Activated naive CD4-positive, alpha-beta T cell treated with anti-CD3 and anti-CD28 coated beads for 36 hours (primary cell): ENCODE measurements at regions of chr7 and their contacts with region 1.

Region 1: GRCh38 chr7:44391746-44392617 is 66.6 kb upstream of the CAMK2B start:
- DNase-seq: no peak
- H3K4me3 Mint-ChIP-seq: no peak overlapping the region
- H3K27ac Mint-ChIP-seq: no peak overlapping the region
- H3K4me1 Mint-ChIP-seq: no peaks in the 10 kb centered on the region
- H3K27me3 Mint-ChIP-seq: no peaks in the 10 kb centered on the region

Region 2: DNA sequence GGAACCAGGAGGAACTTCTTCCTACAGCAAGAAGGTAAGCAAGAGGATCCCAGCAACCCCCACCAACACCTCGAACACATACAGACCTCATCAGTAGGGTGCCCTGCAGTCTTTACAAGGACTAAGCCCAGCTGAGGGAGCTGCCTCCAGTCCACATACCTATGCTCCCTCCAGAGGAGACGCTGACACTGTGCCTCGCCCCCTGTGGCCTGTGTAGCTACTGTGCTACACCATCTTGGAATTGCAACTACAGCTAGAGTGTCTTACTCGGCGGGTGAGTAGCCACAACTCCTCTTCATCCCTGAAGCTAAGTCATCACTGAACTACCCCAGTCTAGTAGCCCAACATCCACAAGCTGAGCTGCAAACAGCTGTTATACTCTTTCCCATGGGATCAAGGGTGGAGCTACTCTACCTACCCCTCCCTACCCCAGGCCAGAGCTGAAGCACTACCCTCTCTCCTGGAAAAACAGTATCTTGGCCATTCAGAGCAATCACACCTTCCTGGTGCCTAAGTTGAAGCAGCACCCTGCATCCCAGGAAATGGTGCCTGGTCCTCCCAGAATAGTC is 24.4 kb before region 1 on chr7:
- CTCF ChIA-PET with region 1: no interaction called
- intact Hi-C with region 1: loop called (anchors 1 kb)
- DNase-seq: no peak
- H3K4me3 Mint-ChIP-seq: no peak overlapping the region
- H3K27ac Mint-ChIP-seq: no peak overlapping the region
- H3K4me1 Mint-ChIP-seq: peaks cover 2% of the 10 kb centered on the region
- H3K27me3 Mint-ChIP-seq: peaks cover 3% of the 10 kb centered on the region